Upper lobe of right lung (tissue), 1 donor: ENCODE measurements at regions of chr10 and their contacts with region 1.

Region 1: DNA sequence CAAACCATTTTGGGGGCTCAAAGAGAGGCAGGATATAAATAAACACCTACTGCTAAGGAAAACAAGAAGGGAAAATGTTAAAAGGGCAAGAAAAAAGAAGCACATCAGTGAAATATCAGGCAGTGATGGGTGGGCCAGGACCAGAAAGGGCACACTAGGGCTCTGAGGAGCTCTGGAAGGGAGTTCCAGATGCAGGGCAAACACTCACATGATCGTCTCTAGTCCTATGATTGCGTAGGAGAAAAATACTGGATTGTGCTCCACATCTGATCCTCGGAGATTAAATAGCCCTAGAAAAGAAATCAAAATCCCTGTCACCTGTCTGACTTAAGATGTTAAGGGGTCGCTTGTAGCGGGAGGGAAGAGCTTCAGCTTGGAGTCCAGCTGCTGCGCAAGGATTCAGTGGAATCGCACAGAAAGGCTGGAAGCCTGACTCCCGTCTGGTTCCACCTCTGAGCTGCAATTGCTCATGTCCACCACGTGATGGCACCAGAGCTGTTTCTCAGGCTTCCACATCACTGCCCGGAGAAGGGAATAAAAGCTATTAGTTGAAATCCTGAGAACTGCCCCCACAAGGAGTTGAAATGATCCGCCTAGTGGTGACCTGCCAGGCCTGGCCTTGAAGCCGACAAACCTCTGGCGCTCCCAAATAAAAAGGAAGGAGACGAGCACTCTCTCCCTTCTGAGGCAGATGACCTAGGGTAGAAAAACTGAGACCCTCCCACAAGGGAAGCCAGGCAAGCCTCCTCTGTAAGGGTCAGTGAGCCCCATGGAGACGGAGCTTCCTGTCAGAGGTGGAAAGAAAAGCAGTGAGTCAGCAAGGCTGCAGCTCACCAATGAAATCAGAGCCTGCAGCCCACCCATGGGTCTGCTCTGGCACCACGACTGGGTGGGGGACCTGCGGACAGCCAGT is 39.2 kb downstream of the XPNPEP1 start:
- DNase-seq: peak; percentile 71
- ATAC-seq: peak; percentile 94
- H3K4me3 ChIP-seq: no peak overlapping the region
- H3K27ac ChIP-seq: peak overlapping the region; percentile 62
- H3K4me1 ChIP-seq: peaks cover 12% of the 10 kb centered on the region
- H3K27me3 ChIP-seq: no peaks in the 10 kb centered on the region
- CTCF ChIP-seq: peak; percentile 96

Region 2: DNA sequence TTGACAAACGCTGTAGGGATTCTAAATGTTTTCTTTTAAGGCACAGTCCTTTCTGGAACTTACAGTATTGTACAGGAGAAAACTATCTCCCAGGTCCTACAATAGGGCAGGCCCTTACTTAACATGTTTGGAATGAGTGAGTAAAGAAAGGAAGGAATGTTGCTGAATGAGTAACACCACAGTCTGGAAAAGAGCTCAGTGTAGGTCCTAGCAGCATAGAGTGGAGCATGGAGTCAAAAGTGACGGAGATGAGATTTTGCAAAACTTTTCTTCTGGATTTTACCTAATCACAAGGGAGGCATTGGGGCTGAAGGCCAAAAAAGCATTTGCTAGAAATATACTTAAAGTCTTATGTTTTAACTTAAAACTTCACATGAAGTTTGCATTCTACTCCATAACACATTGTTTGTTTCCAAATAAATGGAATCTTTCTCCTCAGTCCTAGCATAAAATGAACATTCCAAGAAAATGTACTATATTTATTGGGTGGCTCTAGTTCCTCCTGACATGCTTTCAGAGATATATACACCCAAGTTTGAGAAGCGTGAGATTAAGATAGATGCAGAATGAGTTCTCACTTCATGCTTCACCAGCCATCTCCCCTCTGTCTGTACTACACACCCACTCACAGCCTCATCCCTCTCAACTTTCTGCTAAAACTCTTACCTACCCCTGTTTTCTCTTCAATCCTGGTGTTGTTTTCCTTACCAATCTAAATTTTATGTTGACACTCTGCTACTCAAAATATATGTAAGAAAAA is 103.5 kb after region 1 on chr10:
- intact Hi-C with region 1: loop called (anchors 10 kb)
- DNase-seq: no peak
- ATAC-seq: peak; percentile 59
- H3K4me3 ChIP-seq: no peak overlapping the region
- H3K27ac ChIP-seq: no peak overlapping the region
- H3K4me1 ChIP-seq: no peaks in the 10 kb centered on the region
- H3K27me3 ChIP-seq: no peaks in the 10 kb centered on the region
- CTCF ChIP-seq: no peak